Caco-2 (cell line): ENCODE measurements at regions of chr5 and their contacts with region 1.

Region 1: GRCh38 chr5:88268385-88269184 is at the start of gene TMEM161B:
- DNase-seq: peak; percentile 93 to 96
- H3K4me3 ChIP-seq: peak within 1 kb of the TSS; percentile 60
- H3K4me3 Mint-ChIP-seq: peak within 1 kb of the TSS; percentile 98
- H3K27ac Mint-ChIP-seq: peak within 1 kb of the TSS; percentile 98
- H3K4me1 ChIP-seq: peaks cover 6% of the 10 kb centered on the region
- H3K4me1 Mint-ChIP-seq: peaks cover 16% of the 10 kb centered on the region
- H3K27me3 ChIP-seq: no peaks in the 10 kb centered on the region
- H3K27me3 Mint-ChIP-seq: no peaks in the 10 kb centered on the region
- CTCF ChIP-seq: no peak
- total RNA-seq, gene TMEM161B: 22.1 and 27.0 TPM in 2 replicates

Region 2: GRCh38 chr5:87412630-87413342 is 855.8 kb before region 1 on chr5 and contains the start of gene CCNH:
- CTCF ChIA-PET with region 1: no interaction called
- POLR2A ChIA-PET with region 1: no interaction called
- intact Hi-C with region 1: loop called (anchors 5 kb)
- DNase-seq: peak; percentile 96 to 97
- H3K4me3 ChIP-seq: peak within 1 kb of the TSS; percentile 78
- H3K4me3 Mint-ChIP-seq: peak within 1 kb of the TSS; percentile 91
- H3K27ac Mint-ChIP-seq: peak within 1 kb of the TSS; percentile 93
- H3K4me1 ChIP-seq: 0 out of 2 replicates have a peak, but pooled peaks cover 5% of the 10 kb centered on the region
- H3K4me1 Mint-ChIP-seq: no peaks in the 10 kb centered on the region
- H3K27me3 ChIP-seq: no peaks in the 10 kb centered on the region
- H3K27me3 Mint-ChIP-seq: peaks cover 2% of the 10 kb centered on the region
- CTCF ChIP-seq: no peak
- total RNA-seq, gene CCNH: 39.4 and 39.6 TPM in 2 replicates

Region 3: GRCh38 chr5:88195636-88196035 is 72.9 kb before region 1 on chr5:
- CTCF ChIA-PET with region 1: no interaction called
- POLR2A ChIA-PET with region 1: no interaction called
- intact Hi-C with region 1: loop called (anchors 2 kb)
- DNase-seq: no peak
- H3K4me3 ChIP-seq: no peak overlapping the region
- H3K4me3 Mint-ChIP-seq: no peak overlapping the region
- H3K27ac Mint-ChIP-seq: no peak overlapping the region
- H3K4me1 ChIP-seq: no peaks in the 10 kb centered on the region
- H3K4me1 Mint-ChIP-seq: no peaks in the 10 kb centered on the region
- H3K27me3 ChIP-seq: no peaks in the 10 kb centered on the region
- H3K27me3 Mint-ChIP-seq: no peaks in the 10 kb centered on the region
- CTCF ChIP-seq: no peak

Region 4: GRCh38 chr5:88283690-88284089 is 15.1 kb after region 1 on chr5:
- CTCF ChIA-PET with region 1: no interaction called
- POLR2A ChIA-PET with region 1: no interaction called
- intact Hi-C with region 1: loop called (anchors 2 kb)
- DNase-seq: no peak
- H3K4me3 ChIP-seq: no peak overlapping the region
- H3K4me3 Mint-ChIP-seq: no peak overlapping the region
- H3K27ac Mint-ChIP-seq: no peak overlapping the region
- H3K4me1 ChIP-seq: no peaks in the 10 kb centered on the region
- H3K4me1 Mint-ChIP-seq: peaks cover 8% of the 10 kb centered on the region
- H3K27me3 ChIP-seq: no peaks in the 10 kb centered on the region
- H3K27me3 Mint-ChIP-seq: no peaks in the 10 kb centered on the region
- CTCF ChIP-seq: no peak

Region 5: GRCh38 chr5:88680253-88681132 is 411.9 kb after region 1 on chr5:
- CTCF ChIA-PET with region 1: no interaction called
- POLR2A ChIA-PET with region 1: no interaction called
- intact Hi-C with region 1: loop called (anchors 2 kb)
- DNase-seq: peak; percentile 58 to 86
- H3K4me3 ChIP-seq: peak overlapping the region; percentile 32
- H3K4me3 Mint-ChIP-seq: peak overlapping the region; percentile 48
- H3K27ac Mint-ChIP-seq: no peak overlapping the region
- H3K4me1 ChIP-seq: 0 out of 2 replicates have a peak, but pooled peaks cover 9% of the 10 kb centered on the region
- H3K4me1 Mint-ChIP-seq: peaks cover 11% of the 10 kb centered on the region
- H3K27me3 ChIP-seq: peaks cover 1% of the 10 kb centered on the region
- H3K27me3 Mint-ChIP-seq: peaks cover 50% of the 10 kb centered on the region
- CTCF ChIP-seq: peak; percentile 92